Activated CD4-positive, alpha-beta T cell treated with anti-CD3 and anti-CD28 coated beads for 36 hours (primary cell): ENCODE measurements at regions of chr3 and their contacts with region 1.

Region 1: GRCh38 chr3:196502775-196503195 is 783 bp downstream of the RNF168 start:
- DNase-seq: peak; percentile 77
- ATAC-seq: peak; percentile 39
- H3K4me3 Mint-ChIP-seq: peak overlapping the region; percentile 96
- H3K27ac Mint-ChIP-seq: peak overlapping the region; percentile 97
- H3K4me1 Mint-ChIP-seq: peaks cover 27% of the 10 kb centered on the region
- H3K27me3 Mint-ChIP-seq: no peaks in the 10 kb centered on the region

Region 2: GRCh38 chr3:195542698-195543499 is 959.9 kb before region 1 on chr3 and contains the start of gene PPP1R2:
- CTCF ChIA-PET with region 1: no interaction called
- POLR2A ChIA-PET with region 1: no interaction called
- intact Hi-C with region 1: loop called in 1 of 2 experiments (anchors 5 kb)
- DNase-seq: peak; percentile 97
- ATAC-seq: peak; percentile 72
- H3K4me3 Mint-ChIP-seq: peak within 1 kb of the TSS; percentile 95
- H3K27ac Mint-ChIP-seq: peak within 1 kb of the TSS; percentile 95
- H3K4me1 Mint-ChIP-seq: peaks cover 65% of the 10 kb centered on the region
- H3K27me3 Mint-ChIP-seq: no peaks in the 10 kb centered on the region
- total RNA-seq, gene PPP1R2: 77.0 to 134 TPM

Region 3: GRCh38 chr3:196274585-196274984 is 228.2 kb before region 1 on chr3:
- CTCF ChIA-PET with region 1: no interaction called
- POLR2A ChIA-PET with region 1: no interaction called
- intact Hi-C with region 1: loop called (anchors 1 to 5 kb)
- DNase-seq: peak; percentile 79
- ATAC-seq: peak; percentile 84
- H3K4me3 Mint-ChIP-seq: peak overlapping the region; percentile 56
- H3K27ac Mint-ChIP-seq: peak overlapping the region; percentile 95
- H3K4me1 Mint-ChIP-seq: peaks cover 65% of the 10 kb centered on the region
- H3K27me3 Mint-ChIP-seq: no peaks in the 10 kb centered on the region

Region 4: GRCh38 chr3:196518966-196519717 is 16.4 kb after region 1 on chr3:
- CTCF ChIA-PET with region 1: interaction called, 35 read pairs
- POLR2A ChIA-PET with region 1: no interaction called
- intact Hi-C with region 1: loop called in 1 of 2 experiments (anchors 1 kb)
- DNase-seq: peak; percentile 84
- ATAC-seq: peak; percentile 73
- H3K4me3 Mint-ChIP-seq: no peak overlapping the region
- H3K27ac Mint-ChIP-seq: no peak overlapping the region
- H3K4me1 Mint-ChIP-seq: no peaks in the 10 kb centered on the region
- H3K27me3 Mint-ChIP-seq: peaks cover 2% of the 10 kb centered on the region

Region 5: GRCh38 chr3:196632046-196632751 is 129.4 kb after region 1 on chr3:
- CTCF ChIA-PET with region 1: no interaction called
- POLR2A ChIA-PET with region 1: no interaction called
- intact Hi-C with region 1: loop called (anchors 2 kb)
- DNase-seq: peak; percentile 93
- ATAC-seq: peak; percentile 80
- H3K4me3 Mint-ChIP-seq: peak overlapping the region; percentile 81
- H3K27ac Mint-ChIP-seq: peak overlapping the region; percentile 95
- H3K4me1 Mint-ChIP-seq: peaks cover 55% of the 10 kb centered on the region
- H3K27me3 Mint-ChIP-seq: no peaks in the 10 kb centered on the region

Region 6: GRCh38 chr3:196739671-196740480 is 237.1 kb after region 1 on chr3 and contains the start of gene PAK2:
- CTCF ChIA-PET with region 1: no interaction called
- POLR2A ChIA-PET with region 1: interaction called, 3 read pairs
- intact Hi-C with region 1: loop called in 1 of 2 experiments (anchors 1 kb)
- DNase-seq: peak; percentile 94
- ATAC-seq: peak; percentile 92
- H3K4me3 Mint-ChIP-seq: peak within 1 kb of the TSS; percentile 93
- H3K27ac Mint-ChIP-seq: peak within 1 kb of the TSS; percentile 99
- H3K4me1 Mint-ChIP-seq: peaks cover 25% of the 10 kb centered on the region
- H3K27me3 Mint-ChIP-seq: no peaks in the 10 kb centered on the region
- total RNA-seq, gene PAK2: 57.6 to 82.2 TPM